ENCODE measurements at regions of chr15 and their contacts with region 1.

Region 1: DNA sequence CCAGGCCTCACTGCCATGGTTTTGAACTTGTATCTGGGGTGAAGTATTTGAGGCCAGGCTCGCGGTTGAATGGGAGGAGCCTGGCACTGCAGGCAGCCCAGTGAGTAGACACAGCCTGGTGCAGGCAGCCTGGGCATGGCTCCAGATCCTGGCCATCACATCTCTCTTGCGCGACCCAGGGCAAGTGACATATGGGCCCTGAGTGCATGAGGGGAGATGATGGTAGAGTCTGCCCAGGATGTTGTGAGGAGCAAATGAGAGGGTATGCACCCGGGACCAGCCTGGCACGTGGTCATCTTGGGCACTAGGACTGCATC is 103.5 kb downstream of the TBC1D2B start:
- DNase-seq: peak; percentile 57
- H3K4me3 ChIP-seq: no peak overlapping the region
- H3K27ac ChIP-seq: peak overlapping the region in 3 of 4 donors; percentile 37 to 48 (median 39)
- H3K4me1 ChIP-seq: peaks cover 6 to 12% (median 11%) of the 10 kb centered on the region in 4 donors
- H3K27me3 ChIP-seq: no peaks in the 10 kb centered on the region
- CTCF ChIP-seq: no peak
- EP300 ChIP-seq: no peak
- POLR2A ChIP-seq: no peak

Region 2: GRCh38 chr15:78695854-78696253 is 721.8 kb after region 1 on chr15:
- in situ Hi-C with region 1: no loop called
- intact Hi-C with region 1: no loop called
- DNase-seq: no peak
- H3K4me3 ChIP-seq: no peak overlapping the region
- H3K27ac ChIP-seq: no peak overlapping the region
- H3K4me1 ChIP-seq: no peaks in the 10 kb centered on the region
- H3K27me3 ChIP-seq: no peaks in the 10 kb centered on the region
- CTCF ChIP-seq: no peak
- EP300 ChIP-seq: no peak
- POLR2A ChIP-seq: no peak

Region 3: DNA sequence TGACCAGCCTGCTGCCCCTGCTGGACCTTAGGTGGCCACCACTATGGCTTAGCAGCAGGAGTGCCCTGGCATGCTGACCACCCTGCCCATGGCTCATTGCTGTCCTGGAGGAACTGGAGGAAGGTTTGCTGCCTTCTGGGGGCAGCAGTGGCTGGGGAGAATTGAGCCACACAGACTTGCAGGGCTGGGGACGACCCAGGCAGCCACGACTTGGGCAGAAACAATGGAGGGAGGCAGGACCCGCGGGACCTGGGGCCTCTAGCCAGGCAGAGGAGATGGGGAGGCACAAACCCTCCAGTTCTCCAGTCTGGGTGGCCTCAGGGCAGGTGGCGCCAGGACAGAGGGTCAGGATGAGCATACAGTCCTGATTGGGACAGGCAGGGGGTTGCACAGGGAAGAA is 804.4 kb after region 1 on chr15:
- in situ Hi-C with region 1: no loop called
- intact Hi-C with region 1: loop called (anchors 10 kb)
- DNase-seq: no peak
- H3K4me3 ChIP-seq: no peak overlapping the region
- H3K27ac ChIP-seq: no peak overlapping the region
- H3K4me1 ChIP-seq: peaks cover 0 to 3% (median 0%) of the 10 kb centered on the region in 4 donors
- H3K27me3 ChIP-seq: no peaks in the 10 kb centered on the region
- CTCF ChIP-seq: no peak
- EP300 ChIP-seq: no peak
- POLR2A ChIP-seq: no peak

Measured in transverse colon (tissue), 4 donors.